Caco-2 (cell line): ENCODE measurements at regions of chr1 and their contacts with region 1.

Region 1: GRCh38 chr1:43946236-43947060 is at the start of gene IPO13:
- DNase-seq: peak; percentile 93 to 95
- H3K4me3 ChIP-seq: peak within 1 kb of the TSS; percentile 90
- H3K4me3 Mint-ChIP-seq: peak within 1 kb of the TSS; percentile 80
- H3K27ac Mint-ChIP-seq: peak within 1 kb of the TSS; percentile 58
- H3K4me1 ChIP-seq: no peaks in the 10 kb centered on the region
- H3K4me1 Mint-ChIP-seq: no peaks in the 10 kb centered on the region
- H3K27me3 ChIP-seq: no peaks in the 10 kb centered on the region
- H3K27me3 Mint-ChIP-seq: no peaks in the 10 kb centered on the region
- CTCF ChIP-seq: peak; percentile 55 to 61
- total RNA-seq, gene IPO13: 14.1 and 15.9 TPM in 2 replicates

Region 2: GRCh38 chr1:43743206-43743605 is 203.2 kb before region 1 on chr1:
- CTCF ChIA-PET with region 1: no interaction called
- POLR2A ChIA-PET with region 1: no interaction called
- intact Hi-C with region 1: no loop called
- DNase-seq: no peak
- H3K4me3 ChIP-seq: no peak overlapping the region
- H3K4me3 Mint-ChIP-seq: no peak overlapping the region
- H3K27ac Mint-ChIP-seq: no peak overlapping the region
- H3K4me1 ChIP-seq: no peaks in the 10 kb centered on the region
- H3K4me1 Mint-ChIP-seq: no peaks in the 10 kb centered on the region
- H3K27me3 ChIP-seq: no peaks in the 10 kb centered on the region
- H3K27me3 Mint-ChIP-seq: no peaks in the 10 kb centered on the region
- CTCF ChIP-seq: no peak

Region 3: DNA sequence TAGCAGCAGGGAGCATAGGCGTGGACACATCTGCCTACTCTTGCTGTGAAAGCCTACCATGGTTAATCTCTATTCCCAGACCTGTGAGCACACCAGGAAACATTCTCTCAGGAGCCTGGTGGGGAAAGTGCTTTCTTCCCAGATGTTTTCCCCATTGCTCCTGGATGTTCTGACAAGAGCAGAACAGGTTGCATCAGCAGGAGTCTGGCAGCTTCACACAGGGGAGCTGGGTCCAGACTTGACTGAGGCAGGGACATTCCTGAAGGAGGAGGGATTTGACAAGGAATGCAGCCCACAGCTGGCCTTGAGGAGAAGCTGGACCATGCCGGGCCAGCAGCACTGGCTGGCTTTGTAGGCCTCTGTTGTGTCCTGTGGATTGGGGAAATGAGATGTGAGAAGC is 33.8 kb before region 1 on chr1:
- CTCF ChIA-PET with region 1: no interaction called
- POLR2A ChIA-PET with region 1: no interaction called
- intact Hi-C with region 1: no loop called
- DNase-seq: peak in 1 of 2 experiments; percentile 31
- H3K4me3 ChIP-seq: no peak overlapping the region
- H3K4me3 Mint-ChIP-seq: no peak overlapping the region
- H3K27ac Mint-ChIP-seq: peak overlapping the region; percentile 12
- H3K4me1 ChIP-seq: no peaks in the 10 kb centered on the region
- H3K4me1 Mint-ChIP-seq: peaks cover 11% of the 10 kb centered on the region
- H3K27me3 ChIP-seq: no peaks in the 10 kb centered on the region
- H3K27me3 Mint-ChIP-seq: peaks cover 6% of the 10 kb centered on the region
- CTCF ChIP-seq: no peak

Region 4: GRCh38 chr1:43934101-43934985 is 12.1 kb before region 1 on chr1:
- CTCF ChIA-PET with region 1: interaction called, 12 read pairs
- POLR2A ChIA-PET with region 1: no interaction called
- intact Hi-C with region 1: no loop called
- DNase-seq: peak; percentile 59 to 63
- H3K4me3 ChIP-seq: no peak overlapping the region
- H3K4me3 Mint-ChIP-seq: peak overlapping the region; percentile 61
- H3K27ac Mint-ChIP-seq: no peak overlapping the region
- H3K4me1 ChIP-seq: peaks cover 9% of the 10 kb centered on the region
- H3K4me1 Mint-ChIP-seq: no peaks in the 10 kb centered on the region
- H3K27me3 ChIP-seq: no peaks in the 10 kb centered on the region
- H3K27me3 Mint-ChIP-seq: no peaks in the 10 kb centered on the region
- CTCF ChIP-seq: peak; percentile 61 to 72

Region 5: GRCh38 chr1:43974443-43975248 is 28.2 kb after region 1 on chr1 and contains the start of gene ATP6V0B:
- CTCF ChIA-PET with region 1: interaction called, 3 read pairs
- POLR2A ChIA-PET with region 1: interaction called, 8 read pairs
- intact Hi-C with region 1: loop called (anchors 1 kb)
- DNase-seq: peak; percentile 91 to 93
- H3K4me3 ChIP-seq: peak within 1 kb of the TSS; percentile 96
- H3K4me3 Mint-ChIP-seq: peak within 1 kb of the TSS; percentile 91
- H3K27ac Mint-ChIP-seq: peak within 1 kb of the TSS; percentile 88
- H3K4me1 ChIP-seq: peaks cover 17% of the 10 kb centered on the region
- H3K4me1 Mint-ChIP-seq: peaks cover 17% of the 10 kb centered on the region
- H3K27me3 ChIP-seq: no peaks in the 10 kb centered on the region
- H3K27me3 Mint-ChIP-seq: no peaks in the 10 kb centered on the region
- CTCF ChIP-seq: peak in 1 of 2 experiments; percentile 23
- total RNA-seq, gene ATP6V0B: 89.9 and 91.2 TPM in 2 replicates